ENCODE measurements at regions of chr6 and their contacts with region 1.

Region 1: DNA sequence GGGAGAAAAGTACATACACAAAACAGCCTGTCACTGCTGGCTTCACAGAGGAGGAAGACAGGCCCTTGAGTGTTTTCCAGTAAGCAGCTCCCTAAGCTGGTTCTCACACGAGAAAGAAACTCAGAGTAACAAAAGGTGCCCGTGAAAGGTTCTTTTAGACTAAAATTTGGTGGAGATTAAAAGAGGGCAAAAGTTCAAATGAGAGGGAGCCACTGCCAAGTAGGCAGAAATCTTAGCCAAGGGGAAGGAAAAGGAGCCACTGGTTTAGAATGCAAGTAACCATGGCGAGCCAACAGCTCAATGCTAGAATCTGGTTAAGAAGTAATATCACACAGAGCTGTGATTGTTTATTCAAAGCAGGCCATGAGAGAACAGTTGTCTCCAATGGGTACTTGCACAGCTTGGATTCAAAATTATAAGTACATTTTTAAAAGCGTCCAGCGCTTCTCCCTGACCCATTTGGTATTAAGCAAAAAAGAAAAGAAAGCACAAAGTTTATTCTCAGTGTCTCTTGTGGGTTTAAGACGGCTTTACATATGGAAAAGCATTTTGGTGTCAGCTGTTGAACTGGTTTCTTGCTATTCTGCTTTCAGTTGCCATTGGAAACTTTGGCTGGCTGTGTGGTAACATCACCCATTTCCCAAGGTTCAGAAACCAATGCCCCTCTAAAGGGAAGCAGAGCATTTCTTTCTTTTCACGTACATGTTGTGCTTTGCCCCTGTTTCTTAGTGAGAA is 648.5 kb downstream of the RNF144B start:
- DNase-seq: no peak
- H3K4me3 ChIP-seq: no peak overlapping the region
- H3K27ac ChIP-seq: no peak overlapping the region
- H3K4me1 ChIP-seq: no peaks in the 10 kb centered on the region
- H3K27me3 ChIP-seq: no peaks in the 10 kb centered on the region
- CTCF ChIP-seq: no peak

Region 2: DNA sequence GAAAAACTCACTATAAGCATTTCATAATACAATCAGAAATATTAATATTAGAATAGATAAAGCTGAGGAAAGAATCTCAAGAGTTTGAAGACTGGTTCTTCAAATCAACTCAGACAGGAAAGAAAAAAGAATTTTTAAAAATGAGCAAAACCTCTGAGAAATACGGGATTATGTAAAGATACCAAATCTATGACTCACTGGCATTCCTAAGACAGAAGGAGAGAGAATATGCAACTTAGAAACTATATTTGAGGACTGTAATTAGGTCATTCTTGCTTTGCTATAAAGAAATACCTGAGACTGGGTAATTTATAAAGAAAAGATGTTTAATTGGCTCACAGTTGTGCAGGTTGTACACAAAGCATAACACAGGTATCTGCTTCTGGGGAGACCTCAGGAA is 16.6 kb after region 1 on chr6:
- CTCF ChIA-PET with region 1: no interaction called
- dilution Hi-C with region 1: no loop called
- in situ Hi-C with region 1: no loop called
- intact Hi-C with region 1: loop called (anchors 1 kb)
- DNase-seq: peak; percentile 20
- H3K4me3 ChIP-seq: no peak overlapping the region
- H3K27ac ChIP-seq: no peak overlapping the region
- H3K4me1 ChIP-seq: peaks cover 7% of the 10 kb centered on the region
- H3K27me3 ChIP-seq: no peaks in the 10 kb centered on the region
- CTCF ChIP-seq: no peak

Region 3: GRCh38 chr6:20069021-20069522 is 1033.4 kb after region 1 on chr6:
- CTCF ChIA-PET with region 1: no interaction called
- dilution Hi-C with region 1: no loop called
- in situ Hi-C with region 1: no loop called
- intact Hi-C with region 1: loop called (anchors 5 kb)
- DNase-seq: no peak
- H3K4me3 ChIP-seq: no peak overlapping the region
- H3K27ac ChIP-seq: no peak overlapping the region
- H3K4me1 ChIP-seq: no peaks in the 10 kb centered on the region
- H3K27me3 ChIP-seq: no peaks in the 10 kb centered on the region
- CTCF ChIP-seq: no peak